Activated CD4-positive, alpha-beta T cell treated with anti-CD3 and anti-CD28 coated beads, Interleukin-2, amount 10 ng/mL, durations not matched to agents 24 days and 14 days (primary cell): ENCODE measurements at regions of chr15 and their contacts with region 1.

Region 1: GRCh38 chr15:63466378-63467192 is 37.8 kb upstream of the USP3 start:
- DNase-seq: peak; percentile 91
- H3K4me3 Mint-ChIP-seq: no peak overlapping the region
- H3K27ac Mint-ChIP-seq: no peak overlapping the region
- H3K4me1 Mint-ChIP-seq: peaks cover 23% of the 10 kb centered on the region
- H3K27me3 Mint-ChIP-seq: peaks cover 13% of the 10 kb centered on the region

Region 2: GRCh38 chr15:63553388-63553791 is 86.8 kb after region 1 on chr15:
- intact Hi-C with region 1: loop called (anchors 5 kb)
- DNase-seq: no peak
- H3K4me3 Mint-ChIP-seq: no peak overlapping the region
- H3K27ac Mint-ChIP-seq: no peak overlapping the region
- H3K4me1 Mint-ChIP-seq: peaks cover 21% of the 10 kb centered on the region
- H3K27me3 Mint-ChIP-seq: no peaks in the 10 kb centered on the region

Region 3: GRCh38 chr15:63600616-63601025 is 134.0 kb after region 1 on chr15:
- intact Hi-C with region 1: loop called (anchors 1 kb)
- DNase-seq: peak; percentile 97
- H3K4me3 Mint-ChIP-seq: peak overlapping the region; percentile 93
- H3K27ac Mint-ChIP-seq: peak overlapping the region; percentile 91
- H3K4me1 Mint-ChIP-seq: peaks cover 49% of the 10 kb centered on the region
- H3K27me3 Mint-ChIP-seq: no peaks in the 10 kb centered on the region